ENCODE measurements at regions of chr20 and their contacts with region 1.

Region 1: GRCh38 chr20:62668441-62669027 is 26.2 kb downstream of the SLCO4A1 start:
- DNase-seq: peak; percentile 58 to 82
- ATAC-seq: peak; percentile 36 to 82 (median 70)
- H3K4me3 ChIP-seq: no peak overlapping the region
- H3K27ac ChIP-seq: no peak overlapping the region
- H3K4me1 ChIP-seq: peaks cover 0 to 27% (median 23%) of the 10 kb centered on the region in 9 donors
- H3K27me3 ChIP-seq: no peaks in the 10 kb centered on the region
- CTCF ChIP-seq: peak; percentile 60 to 88 (median 86)

Region 2: DNA sequence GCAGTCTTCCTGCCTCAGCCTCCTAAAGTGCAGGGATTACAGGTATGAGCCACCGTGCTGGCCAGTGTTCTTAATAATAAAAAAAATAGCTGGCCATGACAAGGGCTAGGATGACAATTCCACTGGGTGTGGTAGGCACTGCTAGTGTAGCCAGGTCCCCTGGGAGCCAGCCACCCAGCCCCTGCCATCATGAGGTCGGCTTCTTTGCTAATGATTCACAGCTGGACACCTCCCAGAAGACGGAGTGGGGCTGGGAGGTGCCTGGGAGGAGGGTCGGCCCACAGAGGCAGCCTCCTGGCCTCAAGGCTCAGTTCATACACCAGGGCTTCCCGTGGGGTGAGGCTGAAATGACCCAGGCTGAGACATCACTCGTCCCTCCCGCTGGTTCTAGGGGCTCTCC is 833.2 kb before region 1 on chr20:
- intact Hi-C with region 1: no loop called
- DNase-seq: no peak
- ATAC-seq: no peak
- H3K4me3 ChIP-seq: no peak overlapping the region
- H3K27ac ChIP-seq: no peak overlapping the region
- H3K4me1 ChIP-seq: no peaks in the 10 kb centered on the region
- H3K27me3 ChIP-seq: peaks cover 0 to 66% (median 28%) of the 10 kb centered on the region in 7 donors
- CTCF ChIP-seq: no peak

Region 3: GRCh38 chr20:62740286-62741141 is 72.0 kb after region 1 on chr20:
- intact Hi-C with region 1: no loop called
- DNase-seq: peak in 1 of 2 donors; percentile 16
- ATAC-seq: peak in 6 of 8 donors; percentile 25 to 58 (median 50)
- H3K4me3 ChIP-seq: peak overlapping the region in 7 of 10 donors; percentile 1 to 39 (median 7)
- H3K27ac ChIP-seq: peak overlapping the region in 2 of 10 donors; percentile 55 to 90
- H3K4me1 ChIP-seq: peaks cover 0 to 40% (median 13%) of the 10 kb centered on the region in 9 donors
- H3K27me3 ChIP-seq: peaks cover 0 to 68% (median 49%) of the 10 kb centered on the region in 7 donors
- CTCF ChIP-seq: no peak

Region 4: DNA sequence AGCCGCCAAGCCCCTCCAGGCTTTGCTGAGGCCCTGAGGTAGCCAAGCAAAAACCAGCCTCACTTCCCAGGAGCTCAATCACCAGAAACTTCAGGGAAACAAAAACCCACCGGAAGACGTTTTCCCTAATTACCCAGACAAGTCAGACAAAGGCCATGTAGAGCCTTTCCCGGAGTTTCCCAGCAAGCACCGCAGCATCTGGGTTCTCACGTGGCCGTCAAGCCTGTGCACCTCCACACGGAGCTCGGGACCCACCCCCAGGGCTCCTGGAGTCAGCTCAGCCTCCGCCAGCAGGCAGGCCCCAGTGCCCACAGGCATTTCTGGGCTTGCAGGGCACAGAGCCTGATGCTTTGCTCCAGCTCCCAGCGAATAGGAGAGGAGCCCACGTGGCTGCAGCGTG is 117.6 kb after region 1 on chr20:
- intact Hi-C with region 1: loop called (anchors 1 to 5 kb)
- DNase-seq: no peak
- ATAC-seq: no peak
- H3K4me3 ChIP-seq: no peak overlapping the region
- H3K27ac ChIP-seq: no peak overlapping the region
- H3K4me1 ChIP-seq: peaks cover 3 to 28% (median 18%) of the 10 kb centered on the region in 9 donors
- H3K27me3 ChIP-seq: no peaks in the 10 kb centered on the region
- CTCF ChIP-seq: no peak

Region 5: DNA sequence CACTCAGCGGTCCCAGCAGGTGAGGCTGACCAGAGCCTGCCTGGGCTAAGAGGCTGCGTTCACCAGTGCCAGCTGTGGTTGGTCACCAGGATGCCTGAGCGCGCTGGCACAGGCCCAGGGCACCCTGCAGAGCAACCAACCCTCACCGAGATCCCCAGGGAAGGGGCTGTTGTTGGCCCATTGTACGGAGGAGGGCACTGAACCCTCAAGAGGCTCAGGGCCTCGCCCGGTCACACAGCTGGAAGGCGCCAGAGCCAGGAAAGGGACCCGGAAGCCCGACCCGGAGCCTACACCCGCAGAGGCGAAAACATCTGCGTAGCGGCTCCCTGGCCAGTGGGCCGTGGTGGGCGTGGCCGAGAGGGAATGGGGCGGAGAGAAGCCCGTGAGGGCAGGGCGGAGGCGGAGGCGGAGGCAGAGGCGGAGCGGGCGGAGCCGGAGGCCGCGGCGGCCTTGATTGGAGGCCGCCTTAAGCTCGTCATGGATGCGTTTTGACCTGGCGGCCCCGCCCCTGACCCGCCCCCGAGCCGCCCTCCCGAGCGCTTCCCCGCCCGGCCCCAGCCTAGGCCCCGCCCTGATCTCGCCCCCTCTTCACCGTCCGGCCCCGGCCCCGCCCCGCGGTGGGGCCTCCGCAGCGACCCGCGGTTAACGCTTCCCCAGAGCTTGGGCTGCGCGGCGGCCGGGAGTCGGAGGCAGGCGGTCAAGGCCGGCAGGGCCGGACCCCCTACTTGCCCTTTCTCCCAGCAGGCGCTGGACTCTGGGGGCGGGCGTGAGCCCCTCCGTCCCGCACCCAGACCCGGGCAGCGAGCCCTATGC is 125.6 kb after region 1 on chr20:
- intact Hi-C with region 1: loop called (anchors 1 to 5 kb)
- DNase-seq: peak; percentile 97 to 99
- ATAC-seq: peak; percentile 91 to 95 (median 92)
- H3K4me3 ChIP-seq: peak overlapping the region; percentile 14 to 97 (median 69)
- H3K27ac ChIP-seq: peak overlapping the region; percentile 70 to 96 (median 92)
- H3K4me1 ChIP-seq: peaks cover 6 to 50% (median 38%) of the 10 kb centered on the region in 9 donors
- H3K27me3 ChIP-seq: no peaks in the 10 kb centered on the region
- CTCF ChIP-seq: no peak

Region 6: DNA sequence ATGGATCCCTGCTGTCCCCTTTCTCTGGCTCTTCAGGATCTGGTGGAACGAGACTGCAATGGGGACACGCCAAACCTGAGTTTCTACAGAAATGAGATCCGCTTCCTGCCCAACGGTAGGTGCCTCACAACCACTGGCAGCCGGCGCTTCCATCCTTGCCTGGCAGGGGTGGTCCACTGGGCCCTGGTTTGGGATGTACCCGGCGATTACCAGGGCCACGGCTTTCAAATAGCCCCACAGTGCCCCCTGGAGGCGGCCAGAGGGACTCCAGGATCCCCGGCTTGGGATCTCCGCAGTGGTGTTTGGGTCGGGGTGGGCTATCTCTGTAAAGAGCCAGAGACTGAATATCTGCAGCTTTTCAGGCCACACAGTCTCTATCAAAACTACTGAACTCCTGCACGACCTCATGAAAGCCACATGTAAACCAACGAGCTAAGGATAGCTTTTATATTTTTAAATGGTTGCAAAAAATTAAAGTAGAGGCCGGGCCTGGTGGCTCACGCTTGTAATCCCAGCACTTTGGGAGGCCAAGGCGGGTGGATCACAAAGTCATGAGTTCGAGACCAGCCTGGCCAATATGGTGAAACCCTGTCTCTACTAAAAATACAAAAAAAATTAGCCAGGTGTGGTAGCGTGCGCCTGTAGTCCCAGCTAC is 139.8 kb after region 1 on chr20:
- intact Hi-C with region 1: loop called in 9 of 10 experiments (anchors 1 to 5 kb)
- DNase-seq: peak; percentile 66 to 75
- ATAC-seq: peak in 7 of 8 donors; percentile 36 to 68 (median 48)
- H3K4me3 ChIP-seq: no peak overlapping the region
- H3K27ac ChIP-seq: no peak overlapping the region
- H3K4me1 ChIP-seq: peaks cover 11 to 47% (median 39%) of the 10 kb centered on the region in 9 donors
- H3K27me3 ChIP-seq: no peaks in the 10 kb centered on the region
- CTCF ChIP-seq: peak; percentile 92 to 97 (median 95)

Measured in heart right ventricle (tissue), 16 donors.